ENCODE measurements at regions of chr2 and their contacts with region 1.

Region 1: DNA sequence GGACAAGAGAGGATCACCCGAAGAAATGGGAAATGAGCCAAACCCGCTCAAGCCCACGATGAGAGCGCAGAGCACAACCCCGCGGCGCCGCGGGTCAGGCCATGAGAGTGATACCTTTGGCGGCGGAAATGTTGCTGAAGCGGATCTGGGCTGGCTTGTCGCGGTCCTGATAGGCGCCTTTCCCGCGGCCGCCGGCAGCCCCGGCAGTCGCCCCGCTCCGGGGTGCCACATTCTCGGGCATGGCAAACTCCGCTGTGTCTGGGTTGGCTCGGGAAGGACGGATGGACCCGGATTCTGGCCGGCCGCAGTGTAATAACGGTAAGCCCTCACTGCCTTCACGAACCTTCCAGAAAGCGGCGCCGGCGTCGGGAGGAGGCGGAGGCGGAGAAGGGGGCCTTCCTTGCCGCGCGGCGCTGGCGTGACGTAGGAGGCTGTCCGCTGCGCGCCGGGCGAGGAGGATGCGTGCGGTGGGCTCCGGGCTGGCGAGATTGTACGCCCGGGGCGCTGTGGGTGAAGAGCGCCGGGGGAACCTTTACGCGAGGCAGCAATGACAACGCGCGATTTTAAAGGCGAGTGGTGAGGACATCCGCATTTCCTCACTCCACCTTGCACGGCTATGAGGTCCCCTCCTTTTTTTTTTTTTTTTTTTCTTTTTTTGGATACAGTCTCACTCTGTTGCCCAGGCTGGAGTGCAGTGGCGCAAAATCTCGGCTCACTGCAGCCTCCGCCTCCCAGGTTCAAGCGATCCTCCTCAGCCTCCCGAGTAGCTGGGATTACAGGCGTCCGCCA is at the start of gene CCT4:
- DNase-seq: peak; percentile 80
- H3K4me3 ChIP-seq: peak within 1 kb of the TSS; percentile 83 to 97 (median 94)
- H3K27ac ChIP-seq: peak within 1 kb of the TSS; percentile 96
- H3K4me1 ChIP-seq: peaks cover 17% of the 10 kb centered on the region
- H3K27me3 ChIP-seq: no peaks in the 10 kb centered on the region
- CTCF ChIP-seq: no peak
- total RNA-seq, gene CCT4: 117 to 205 TPM

Region 2: DNA sequence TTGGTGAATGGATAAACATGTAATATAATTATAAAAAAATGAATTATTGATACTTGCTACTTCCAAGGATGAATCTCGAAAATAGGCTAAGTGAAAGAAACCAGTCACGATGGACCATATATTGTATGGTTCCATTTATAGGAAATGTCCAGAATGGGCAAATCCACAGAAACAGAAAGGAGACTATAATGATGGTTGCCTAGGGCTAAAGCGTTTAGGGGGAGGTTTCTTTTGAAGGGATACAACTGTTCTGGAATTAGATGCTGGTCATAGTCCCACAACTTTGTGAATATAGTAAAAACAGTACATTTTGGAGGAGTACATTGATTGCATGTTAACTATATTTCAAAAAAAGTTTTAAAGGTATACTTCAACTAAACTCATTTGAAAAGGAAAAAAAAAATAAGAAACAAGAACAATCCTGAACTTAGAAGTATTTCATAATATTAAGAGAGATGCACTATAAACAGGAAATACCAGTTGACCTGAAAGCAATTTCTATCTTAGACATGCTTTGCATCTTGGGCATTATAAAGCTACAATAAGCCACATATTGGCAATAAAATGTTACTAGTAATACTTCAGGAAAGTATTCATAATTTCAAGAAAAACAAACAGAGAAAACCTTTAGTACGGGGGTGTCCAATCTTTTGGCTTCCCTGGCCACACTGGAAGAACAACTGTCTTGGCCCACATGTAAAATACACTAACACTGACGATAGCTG is 596.4 kb before region 1 on chr2:
- CTCF ChIA-PET with region 1: no interaction called
- dilution Hi-C with region 1: no loop called
- in situ Hi-C with region 1: no loop called
- intact Hi-C with region 1: no loop called
- DNase-seq: no peak
- H3K4me3 ChIP-seq: no peak overlapping the region
- H3K27ac ChIP-seq: no peak overlapping the region
- H3K4me1 ChIP-seq: no peaks in the 10 kb centered on the region
- H3K27me3 ChIP-seq: no peaks in the 10 kb centered on the region
- CTCF ChIP-seq: no peak

Region 3: DNA sequence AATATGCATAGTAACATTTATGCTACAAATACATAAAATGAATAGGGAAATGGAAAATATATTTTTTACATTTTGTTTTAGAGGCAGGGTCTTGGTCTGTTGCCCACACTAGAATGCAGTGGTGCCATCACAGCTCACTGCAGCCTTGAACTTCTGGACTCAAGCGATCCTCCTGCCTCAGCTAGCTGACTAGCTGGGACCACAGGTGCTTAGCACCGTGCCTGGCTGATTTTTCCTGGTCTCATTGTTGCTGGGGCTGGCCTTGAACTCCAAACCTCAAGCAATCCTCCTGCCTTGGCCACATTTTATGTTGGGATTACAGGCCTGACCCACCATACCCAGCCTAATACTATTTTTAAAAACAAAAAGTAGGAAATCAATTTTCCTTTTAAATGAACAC is 383.5 kb before region 1 on chr2:
- CTCF ChIA-PET with region 1: no interaction called
- dilution Hi-C with region 1: no loop called
- in situ Hi-C with region 1: no loop called
- intact Hi-C with region 1: no loop called
- DNase-seq: no peak
- H3K4me3 ChIP-seq: no peak overlapping the region
- H3K27ac ChIP-seq: no peak overlapping the region
- H3K4me1 ChIP-seq: no peaks in the 10 kb centered on the region
- H3K27me3 ChIP-seq: no peaks in the 10 kb centered on the region
- CTCF ChIP-seq: no peak

Region 4: DNA sequence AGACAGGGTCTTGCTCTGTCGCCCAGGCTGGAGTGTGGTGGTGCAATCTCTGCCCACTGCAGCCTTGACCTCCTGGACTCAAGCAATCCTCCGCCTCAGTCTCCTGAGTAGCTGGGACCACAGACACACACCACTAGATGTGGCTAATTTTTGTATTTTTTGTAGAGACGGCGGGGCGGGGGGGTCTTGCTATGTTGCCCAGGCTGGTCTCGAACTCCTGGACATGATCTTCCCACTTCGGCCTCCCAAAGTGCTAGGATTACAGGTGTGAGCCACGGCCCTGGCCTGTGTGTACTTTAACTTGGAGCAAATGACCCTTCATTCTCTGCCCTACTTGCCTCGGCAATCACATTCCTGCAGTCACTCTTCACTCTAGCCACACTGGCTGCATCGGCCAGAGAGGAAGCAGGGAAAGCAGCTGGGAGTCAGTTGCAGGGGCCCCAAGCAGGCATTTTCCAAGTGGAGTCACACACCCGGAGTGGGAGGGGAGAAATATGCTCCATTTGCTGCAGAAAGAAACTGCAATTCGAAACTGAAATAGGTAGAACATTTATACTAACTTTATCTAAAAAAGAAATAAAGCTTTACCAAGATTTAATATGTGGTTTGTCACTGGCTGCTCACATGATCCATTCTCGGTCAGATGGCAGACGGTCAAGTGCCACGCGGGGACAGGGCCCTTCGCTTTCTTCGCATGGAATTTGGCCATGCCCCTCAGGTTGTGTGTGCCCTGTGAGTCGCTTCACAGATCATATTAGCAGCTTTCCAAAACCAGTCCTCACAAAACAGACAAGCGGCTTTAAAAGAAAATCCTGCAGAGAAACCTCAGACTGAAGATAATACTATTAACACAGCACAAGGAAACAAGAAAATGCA is 71.7 kb before region 1 on chr2:
- CTCF ChIA-PET with region 1: no interaction called
- dilution Hi-C with region 1: loop called (anchors 5 kb)
- in situ Hi-C with region 1: no loop called
- intact Hi-C with region 1: no loop called
- DNase-seq: no peak
- H3K4me3 ChIP-seq: no peak overlapping the region
- H3K27ac ChIP-seq: no peak overlapping the region
- H3K4me1 ChIP-seq: no peaks in the 10 kb centered on the region
- H3K27me3 ChIP-seq: peaks cover 9% of the 10 kb centered on the region
- CTCF ChIP-seq: no peak

Region 5: GRCh38 chr2:62738981-62739936 is 850.8 kb after region 1 on chr2:
- CTCF ChIA-PET with region 1: no interaction called
- dilution Hi-C with region 1: no loop called
- in situ Hi-C with region 1: no loop called
- intact Hi-C with region 1: no loop called
- DNase-seq: no peak
- H3K4me3 ChIP-seq: no peak overlapping the region
- H3K27ac ChIP-seq: no peak overlapping the region
- H3K4me1 ChIP-seq: no peaks in the 10 kb centered on the region
- H3K27me3 ChIP-seq: no peaks in the 10 kb centered on the region
- CTCF ChIP-seq: no peak

Measured in mammary epithelial cell (primary cell).